Activated CD4-positive, alpha-beta T cell treated with anti-CD3 and anti-CD28 coated beads for 36 hours (primary cell): ENCODE measurements at regions of chr12 and their contacts with region 1.

Region 1: GRCh38 chr12:25052196-25052913 is 103.5 kb upstream of the BCAT1 start:
- DNase-seq: peak; percentile 56
- ATAC-seq: peak; percentile 69
- H3K4me3 Mint-ChIP-seq: peak overlapping the region; percentile 97
- H3K27ac Mint-ChIP-seq: peak overlapping the region; percentile 98
- H3K4me1 Mint-ChIP-seq: peaks cover 42% of the 10 kb centered on the region
- H3K27me3 Mint-ChIP-seq: no peaks in the 10 kb centered on the region

Region 2: DNA sequence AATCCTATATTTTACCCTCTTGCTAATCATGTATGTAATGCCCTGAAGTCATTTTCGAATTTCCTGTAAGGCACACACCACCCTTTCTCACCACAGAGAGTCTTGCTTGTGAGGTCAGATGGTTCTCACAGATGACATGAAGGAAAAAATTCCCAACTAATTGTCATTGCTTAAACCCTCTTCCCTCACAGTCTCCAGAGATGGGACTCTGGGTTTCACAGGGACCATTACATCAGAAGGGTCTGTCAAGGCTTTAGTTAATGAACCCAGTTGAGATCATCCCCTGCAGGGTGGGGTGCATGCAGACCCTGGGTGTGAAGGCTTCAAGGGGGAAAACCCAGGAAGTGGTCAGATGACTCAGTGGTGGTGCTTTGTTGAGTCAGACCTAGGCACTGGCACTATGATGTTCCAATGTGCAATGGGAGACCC is 333.0 kb before region 1 on chr12:
- CTCF ChIA-PET with region 1: no interaction called
- POLR2A ChIA-PET with region 1: no interaction called
- intact Hi-C with region 1: loop called in 1 of 2 experiments (anchors 10 kb)
- DNase-seq: peak; percentile 77
- ATAC-seq: peak; percentile 93
- H3K4me3 Mint-ChIP-seq: no peak overlapping the region
- H3K27ac Mint-ChIP-seq: peak overlapping the region; percentile 87
- H3K4me1 Mint-ChIP-seq: peaks cover 33% of the 10 kb centered on the region
- H3K27me3 Mint-ChIP-seq: peaks cover 8% of the 10 kb centered on the region

Region 3: GRCh38 chr12:24948757-24949722 is 103.3 kb before region 1 on chr12 and contains the start of gene BCAT1:
- CTCF ChIA-PET with region 1: interaction called, 3 read pairs
- POLR2A ChIA-PET with region 1: no interaction called
- intact Hi-C with region 1: loop called (anchors 2 to 5 kb)
- DNase-seq: peak; percentile 71
- ATAC-seq: peak; percentile 45
- H3K4me3 Mint-ChIP-seq: peak within 1 kb of the TSS; percentile 74
- H3K27ac Mint-ChIP-seq: peak within 1 kb of the TSS; percentile 91
- H3K4me1 Mint-ChIP-seq: peaks cover 57% of the 10 kb centered on the region
- H3K27me3 Mint-ChIP-seq: peaks cover 49% of the 10 kb centered on the region
- total RNA-seq, gene BCAT1: 27.9 to 40.0 TPM

Region 4: GRCh38 chr12:25195056-25195971 is 143.0 kb after region 1 on chr12 and contains the starts of genes DNAI7 and ETFRF1:
- CTCF ChIA-PET with region 1: no interaction called
- POLR2A ChIA-PET with region 1: no interaction called
- intact Hi-C with region 1: loop called (anchors 1 to 5 kb)
- DNase-seq: peak; percentile 97
- ATAC-seq: peak; percentile 98
- H3K4me3 Mint-ChIP-seq: peak within 1 kb of the TSS; percentile 91
- H3K27ac Mint-ChIP-seq: peak within 1 kb of the TSS; percentile 96
- H3K4me1 Mint-ChIP-seq: peaks cover 29% of the 10 kb centered on the region
- H3K27me3 Mint-ChIP-seq: no peaks in the 10 kb centered on the region
- total RNA-seq, gene DNAI7: not detected
- total RNA-seq, gene ETFRF1: 11.7 to 15.4 TPM

Region 5: GRCh38 chr12:25328072-25328712 is 275.8 kb after region 1 on chr12:
- CTCF ChIA-PET with region 1: no interaction called
- POLR2A ChIA-PET with region 1: no interaction called
- intact Hi-C with region 1: loop called in 1 of 2 experiments (anchors 5 kb)
- DNase-seq: no peak
- ATAC-seq: no peak
- H3K4me3 Mint-ChIP-seq: no peak overlapping the region
- H3K27ac Mint-ChIP-seq: no peak overlapping the region
- H3K4me1 Mint-ChIP-seq: peaks cover 23% of the 10 kb centered on the region
- H3K27me3 Mint-ChIP-seq: no peaks in the 10 kb centered on the region

Region 6: GRCh38 chr12:25546318-25546717 is 494.0 kb after region 1 on chr12:
- CTCF ChIA-PET with region 1: no interaction called
- POLR2A ChIA-PET with region 1: no interaction called
- intact Hi-C with region 1: no loop called
- DNase-seq: no peak
- ATAC-seq: no peak
- H3K4me3 Mint-ChIP-seq: no peak overlapping the region
- H3K27ac Mint-ChIP-seq: no peak overlapping the region
- H3K4me1 Mint-ChIP-seq: no peaks in the 10 kb centered on the region
- H3K27me3 Mint-ChIP-seq: no peaks in the 10 kb centered on the region

Region 7: GRCh38 chr12:26748741-26749431 is 1696.5 kb after region 1 on chr12:
- CTCF ChIA-PET with region 1: no interaction called
- POLR2A ChIA-PET with region 1: no interaction called
- intact Hi-C with region 1: loop called in 1 of 2 experiments (anchors 10 kb)
- DNase-seq: no peak
- ATAC-seq: peak; percentile 70
- H3K4me3 Mint-ChIP-seq: peak overlapping the region; percentile 30
- H3K27ac Mint-ChIP-seq: peak overlapping the region; percentile 83
- H3K4me1 Mint-ChIP-seq: peaks cover 75% of the 10 kb centered on the region
- H3K27me3 Mint-ChIP-seq: no peaks in the 10 kb centered on the region